KBM-7 (cell line): ENCODE measurements at regions of chr19 and their contacts with region 1.

Region 1: DNA sequence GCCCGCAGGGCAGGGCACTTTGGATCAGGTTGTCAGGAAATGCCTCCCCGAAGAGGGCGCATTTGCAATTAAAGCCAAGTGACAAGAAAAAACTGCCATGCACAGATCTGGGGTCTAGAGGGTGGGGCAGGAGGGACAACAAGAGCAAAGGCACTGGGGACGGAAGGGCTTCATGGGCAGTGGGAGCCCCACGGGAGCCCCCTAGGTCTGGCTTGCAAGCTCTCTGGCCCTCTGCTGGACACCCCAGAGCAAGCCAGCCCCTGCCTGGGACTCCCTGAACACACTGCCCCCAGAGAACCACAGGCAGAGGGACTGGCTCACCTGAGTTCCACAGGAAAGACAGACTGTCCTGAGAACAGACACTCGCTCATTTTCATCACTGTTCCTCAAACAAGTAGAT is 30.2 kb upstream of the C19orf12 start:
- DNase-seq: no peak

Region 2: GRCh38 chr19:30245401-30246039 is 500.3 kb after region 1 on chr19:
- in situ Hi-C with region 1: no loop called
- DNase-seq: no peak

Region 3: DNA sequence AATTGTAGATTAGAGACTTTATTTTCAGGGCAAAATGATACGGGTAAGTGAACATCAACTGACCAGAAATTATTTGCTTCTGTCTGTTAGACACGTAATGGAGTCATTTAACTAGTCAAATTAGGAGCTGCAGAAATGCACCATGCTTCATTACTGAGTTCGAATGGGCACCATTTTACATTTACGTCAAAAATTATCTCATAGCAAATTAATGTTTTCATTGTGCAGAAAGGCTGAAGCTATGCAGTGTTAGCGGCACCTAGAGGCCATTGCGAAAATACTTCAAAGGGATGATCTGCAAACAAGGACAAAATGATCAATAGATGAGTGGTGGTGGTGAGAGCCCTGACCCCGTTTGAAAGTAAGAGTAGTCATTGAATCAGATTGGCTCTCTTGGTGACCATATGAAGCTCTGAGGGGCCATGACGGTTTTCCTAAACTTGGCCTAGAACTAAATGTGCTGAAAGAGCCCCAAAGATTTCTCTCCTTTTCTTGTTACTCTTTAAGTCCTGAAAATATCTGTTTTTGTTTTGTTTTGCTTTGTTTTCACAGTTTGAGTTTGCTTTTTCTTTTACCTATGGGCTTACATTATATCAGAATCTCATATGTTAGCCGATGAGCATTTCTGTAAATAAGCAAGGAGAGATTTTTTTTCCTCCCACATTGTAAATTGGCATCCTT is 904.8 kb after region 1 on chr19:
- in situ Hi-C with region 1: loop called (anchors 25 kb)
- DNase-seq: peak; percentile 51